ENCODE measurements at regions of chr21 and their contacts with region 1.

Region 1: GRCh38 chr21:29372063-29372802 is 73.5 kb downstream of the BACH1 start:
- DNase-seq: peak; percentile 48
- H3K4me3 Mint-ChIP-seq: no peak overlapping the region
- H3K27ac Mint-ChIP-seq: peak overlapping the region; percentile 64
- H3K4me1 Mint-ChIP-seq: peaks cover 23% of the 10 kb centered on the region
- H3K27me3 Mint-ChIP-seq: no peaks in the 10 kb centered on the region

Region 2: GRCh38 chr21:29073222-29074006 is 298.8 kb before region 1 on chr21 and contains the start of gene CCT8:
- CTCF ChIA-PET with region 1: interaction called, 11 read pairs
- POLR2A ChIA-PET with region 1: interaction called, 3 read pairs
- intact Hi-C with region 1: loop called (anchors 5 kb)
- DNase-seq: peak; percentile 99
- H3K4me3 Mint-ChIP-seq: peak within 1 kb of the TSS; percentile 96
- H3K27ac Mint-ChIP-seq: peak within 1 kb of the TSS; percentile 97
- H3K4me1 Mint-ChIP-seq: peaks cover 51% of the 10 kb centered on the region
- H3K27me3 Mint-ChIP-seq: no peaks in the 10 kb centered on the region
- total RNA-seq, gene CCT8: 431 to 435 TPM

Region 3: GRCh38 chr21:29091032-29091431 is 281.2 kb before region 1 on chr21:
- CTCF ChIA-PET with region 1: interaction called, 72 read pairs
- POLR2A ChIA-PET with region 1: no interaction called
- intact Hi-C with region 1: loop called (anchors 1 kb)
- DNase-seq: no peak
- H3K4me3 Mint-ChIP-seq: no peak overlapping the region
- H3K27ac Mint-ChIP-seq: peak overlapping the region; percentile 38
- H3K4me1 Mint-ChIP-seq: peaks cover 15% of the 10 kb centered on the region
- H3K27me3 Mint-ChIP-seq: no peaks in the 10 kb centered on the region

Region 4: GRCh38 chr21:29232601-29233546 is 139.4 kb before region 1 on chr21:
- CTCF ChIA-PET with region 1: interaction called, 4 read pairs
- POLR2A ChIA-PET with region 1: interaction called, 3 read pairs
- intact Hi-C with region 1: loop called (anchors 1 kb)
- DNase-seq: no peak
- H3K4me3 Mint-ChIP-seq: no peak overlapping the region
- H3K27ac Mint-ChIP-seq: peak overlapping the region; percentile 10
- H3K4me1 Mint-ChIP-seq: peaks cover 50% of the 10 kb centered on the region
- H3K27me3 Mint-ChIP-seq: peaks cover 24% of the 10 kb centered on the region

Region 5: GRCh38 chr21:29342363-29342957 is 29.8 kb before region 1 on chr21:
- CTCF ChIA-PET with region 1: interaction called, 11 read pairs
- POLR2A ChIA-PET with region 1: no interaction called
- intact Hi-C with region 1: loop called (anchors 1 kb)
- DNase-seq: peak; percentile 84
- H3K4me3 Mint-ChIP-seq: peak overlapping the region; percentile 53
- H3K27ac Mint-ChIP-seq: peak overlapping the region; percentile 84
- H3K4me1 Mint-ChIP-seq: peaks cover 34% of the 10 kb centered on the region
- H3K27me3 Mint-ChIP-seq: no peaks in the 10 kb centered on the region

Region 6: DNA sequence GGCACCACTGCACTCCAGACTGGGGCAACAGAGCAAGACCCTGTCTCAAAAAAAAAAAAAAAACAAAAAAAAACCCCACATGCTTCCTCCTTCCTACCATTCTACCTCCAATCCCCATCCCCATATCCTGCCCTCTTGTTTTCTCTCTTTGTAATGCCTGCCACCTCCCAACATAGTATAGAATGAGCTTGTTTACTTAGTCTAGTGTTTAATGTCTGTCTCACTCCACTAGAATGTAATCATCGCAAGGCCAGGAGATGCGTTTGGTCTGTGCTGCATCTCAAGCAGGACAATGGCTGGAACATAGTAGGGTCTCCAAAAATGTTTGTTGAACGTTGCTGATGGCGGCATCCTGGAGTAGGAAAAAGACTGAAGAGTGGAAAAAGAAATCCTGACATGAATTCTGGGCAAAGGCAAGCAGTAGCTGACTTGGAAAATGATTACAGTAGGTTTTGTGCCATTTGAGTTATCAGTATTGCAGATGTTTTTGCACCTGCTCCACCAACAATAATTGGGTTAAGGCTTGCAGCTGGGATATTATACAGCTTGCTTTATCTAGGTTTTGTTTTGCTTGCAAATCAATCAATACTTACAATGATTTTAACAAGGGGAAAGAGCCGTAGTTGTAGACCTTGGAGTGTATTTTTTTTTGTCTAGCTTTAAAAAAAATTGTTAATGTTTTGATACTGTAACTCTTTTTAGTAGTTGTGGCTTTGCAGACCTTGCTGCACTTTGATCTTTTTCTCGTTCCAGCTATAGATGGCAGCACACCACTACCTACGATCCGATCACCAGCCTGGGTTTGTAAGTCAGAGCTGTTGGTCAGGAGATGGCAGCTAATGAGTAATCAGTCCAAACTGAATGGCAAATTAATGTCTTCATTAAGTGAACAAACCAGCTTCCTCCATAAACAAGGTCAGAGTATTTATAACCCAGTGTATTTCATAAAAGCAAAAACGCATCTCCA is 11.2 kb before region 1 on chr21:
- CTCF ChIA-PET with region 1: interaction called, 13 read pairs
- POLR2A ChIA-PET with region 1: interaction called, 3 read pairs
- intact Hi-C with region 1: no loop called
- DNase-seq: peak; percentile 24
- H3K4me3 Mint-ChIP-seq: no peak overlapping the region
- H3K27ac Mint-ChIP-seq: no peak overlapping the region
- H3K4me1 Mint-ChIP-seq: peaks cover 5% of the 10 kb centered on the region
- H3K27me3 Mint-ChIP-seq: no peaks in the 10 kb centered on the region